ENCODE measurements at regions of chr11 and their contacts with region 1.

Region 1: GRCh38 chr11:9573052-9573774 is at the start of gene WEE1:
- DNase-seq: peak; percentile 98
- H3K4me3 Mint-ChIP-seq: peak within 1 kb of the TSS; percentile 92
- H3K27ac Mint-ChIP-seq: peak within 1 kb of the TSS; percentile 83
- H3K4me1 Mint-ChIP-seq: peaks cover 52% of the 10 kb centered on the region
- H3K27me3 Mint-ChIP-seq: peaks cover 3% of the 10 kb centered on the region
- total RNA-seq, gene WEE1: 60.5 to 64.2 TPM

Region 2: DNA sequence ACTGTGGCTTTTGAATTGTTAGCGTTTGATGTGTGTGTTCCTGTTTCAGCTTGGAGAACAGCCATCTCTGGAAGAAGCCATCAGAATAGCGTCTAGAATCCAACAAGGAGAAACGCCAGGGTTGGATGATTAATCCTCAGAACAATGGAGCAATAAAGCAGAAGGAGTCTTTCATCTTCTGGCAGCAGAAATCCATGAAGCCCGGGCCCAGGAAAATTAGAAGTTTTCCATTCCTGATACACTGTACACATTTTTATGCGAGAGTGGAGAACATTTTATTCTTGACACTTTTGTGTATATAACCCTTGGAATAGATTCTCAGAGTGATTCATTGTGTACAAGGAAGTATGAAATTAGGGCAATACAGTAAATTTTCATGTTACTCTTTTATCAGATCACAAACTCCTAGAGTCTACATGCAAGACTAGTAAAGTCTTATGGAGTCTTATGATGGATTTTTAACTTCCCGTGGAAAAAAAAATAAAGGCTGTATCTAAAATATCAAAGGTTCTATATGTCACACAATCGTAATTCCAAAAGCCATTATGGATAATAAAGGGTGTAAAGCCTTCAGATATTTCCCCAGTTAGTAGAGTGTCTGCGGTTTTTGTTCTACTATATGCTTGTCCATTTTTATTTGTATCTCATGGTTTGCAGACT is 45.6 kb before region 1 on chr11:
- CTCF ChIA-PET with region 1: interaction called, 12 read pairs
- POLR2A ChIA-PET with region 1: no interaction called
- DNase-seq: no peak
- H3K4me3 Mint-ChIP-seq: no peak overlapping the region
- H3K27ac Mint-ChIP-seq: no peak overlapping the region
- H3K4me1 Mint-ChIP-seq: no peaks in the 10 kb centered on the region
- H3K27me3 Mint-ChIP-seq: no peaks in the 10 kb centered on the region

Measured in activated CD4-positive, alpha-beta T cell treated with anti-CD3 and anti-CD28 coated beads, Interleukin-2, amount 10 ng/mL, durations not matched to agents 7 days and 5 days (primary cell).